ENCODE measurements at regions of chr1 and their contacts with region 1.

Region 1: DNA sequence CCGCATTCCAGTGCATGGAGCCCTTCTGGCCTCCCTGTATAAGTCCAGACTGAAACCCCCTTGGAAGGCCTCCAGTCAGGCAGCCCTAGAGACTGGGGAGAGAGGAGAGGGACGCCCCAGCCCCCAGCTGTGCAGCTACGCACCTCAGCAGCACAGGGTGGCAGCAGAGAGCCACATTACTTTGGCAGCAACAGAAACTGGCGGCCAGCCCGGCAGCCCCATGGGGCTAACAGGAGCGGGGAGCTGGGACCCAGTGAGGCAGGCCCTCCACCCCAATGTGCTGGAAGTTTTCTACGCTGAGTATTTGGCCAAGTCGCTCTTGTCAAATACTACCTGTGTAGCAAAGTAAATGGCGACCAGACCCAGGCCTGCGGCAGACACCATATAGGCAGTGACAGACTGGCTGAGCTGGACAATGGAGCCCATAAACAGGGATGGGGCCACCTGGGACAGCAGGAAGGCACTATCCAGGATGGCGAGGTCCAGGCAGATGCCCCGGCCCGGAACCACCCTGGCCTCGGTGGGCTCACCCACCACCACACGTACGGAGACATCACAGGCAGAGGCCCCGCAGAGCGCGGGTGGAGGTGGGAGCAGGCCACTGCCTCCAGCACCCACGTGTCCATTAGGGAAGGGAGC is 21.2 kb downstream of the SLC45A3 start:
- DNase-seq: peak; percentile 75
- ATAC-seq: peak; percentile 95
- H3K4me3 Mint-ChIP-seq: no peak overlapping the region
- H3K27ac Mint-ChIP-seq: no peak overlapping the region
- H3K4me1 Mint-ChIP-seq: peaks cover 20% of the 10 kb centered on the region
- H3K27me3 Mint-ChIP-seq: no peaks in the 10 kb centered on the region
- CTCF ChIP-seq: peak; percentile 81

Region 2: GRCh38 chr1:204651843-204652421 is 1007.1 kb before region 1 on chr1:
- CTCF ChIA-PET with region 1: no interaction called
- POLR2A ChIA-PET with region 1: no interaction called
- intact Hi-C with region 1: no loop called
- DNase-seq: no peak
- ATAC-seq: no peak
- H3K4me3 Mint-ChIP-seq: no peak overlapping the region
- H3K27ac Mint-ChIP-seq: no peak overlapping the region
- H3K4me1 Mint-ChIP-seq: no peaks in the 10 kb centered on the region
- H3K27me3 Mint-ChIP-seq: peaks cover 15% of the 10 kb centered on the region
- CTCF ChIP-seq: no peak

Region 3: GRCh38 chr1:205523891-205524793 is 134.9 kb before region 1 on chr1:
- CTCF ChIA-PET with region 1: interaction called, 88 read pairs
- POLR2A ChIA-PET with region 1: no interaction called
- intact Hi-C with region 1: loop called (anchors 1 kb)
- DNase-seq: peak; percentile 67
- ATAC-seq: peak; percentile 69
- H3K4me3 Mint-ChIP-seq: no peak overlapping the region
- H3K27ac Mint-ChIP-seq: no peak overlapping the region
- H3K4me1 Mint-ChIP-seq: no peaks in the 10 kb centered on the region
- H3K27me3 Mint-ChIP-seq: peaks cover 6% of the 10 kb centered on the region
- CTCF ChIP-seq: no peak

Region 4: DNA sequence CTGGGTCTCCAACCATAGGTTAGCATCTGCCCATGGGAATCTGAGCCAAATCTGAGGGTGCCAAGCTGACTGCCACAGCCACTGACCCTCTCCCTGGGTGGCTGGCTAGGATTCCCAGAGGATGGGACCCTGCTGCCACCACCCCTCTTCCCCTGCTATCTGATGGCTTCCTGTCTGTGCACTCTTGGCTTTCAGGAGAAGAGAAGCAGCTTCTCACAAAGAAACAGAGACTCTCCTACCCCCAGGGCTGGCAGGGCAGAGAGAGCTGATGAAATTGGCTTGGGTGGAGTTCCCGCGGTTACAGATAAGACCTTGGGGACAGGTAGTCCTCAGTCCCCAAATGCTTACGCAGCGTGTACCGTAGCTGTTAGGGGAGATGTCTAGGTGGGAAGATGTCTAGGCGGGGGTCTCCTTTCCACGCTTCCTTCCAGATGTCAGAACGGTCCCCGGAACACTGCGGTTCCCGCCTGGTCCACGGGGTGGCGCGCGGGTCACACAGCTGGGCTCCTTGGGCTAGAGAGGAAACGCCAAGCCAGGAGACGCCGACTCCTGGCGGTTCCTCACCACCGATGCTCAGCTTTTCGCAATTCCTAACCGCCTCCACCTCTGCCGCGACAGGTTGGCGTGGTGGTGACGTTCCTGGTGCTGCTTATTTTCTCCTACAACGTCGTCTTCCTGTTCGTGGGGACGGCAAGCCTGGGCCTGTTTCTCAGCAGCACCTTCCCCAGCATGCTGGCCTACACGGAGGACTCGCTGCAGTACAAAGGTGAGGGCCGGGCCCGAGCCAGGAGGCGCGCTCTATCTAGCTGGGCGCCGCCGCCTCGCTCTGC is 67.3 kb before region 1 on chr1:
- CTCF ChIA-PET with region 1: interaction called, 298 read pairs
- POLR2A ChIA-PET with region 1: interaction called, 46 read pairs
- intact Hi-C with region 1: loop called (anchors 1 kb)
- DNase-seq: peak; percentile 89
- ATAC-seq: peak; percentile 89
- H3K4me3 Mint-ChIP-seq: peak overlapping the region; percentile 90
- H3K27ac Mint-ChIP-seq: peak overlapping the region; percentile 90
- H3K4me1 Mint-ChIP-seq: peaks cover 48% of the 10 kb centered on the region
- H3K27me3 Mint-ChIP-seq: no peaks in the 10 kb centered on the region
- CTCF ChIP-seq: peak; percentile 87

Region 5: GRCh38 chr1:205711104-205712020 is 52.3 kb after region 1 on chr1:
- CTCF ChIA-PET with region 1: interaction called, 628 read pairs
- POLR2A ChIA-PET with region 1: interaction called, 40 read pairs
- intact Hi-C with region 1: loop called (anchors 1 kb)
- DNase-seq: no peak
- ATAC-seq: peak; percentile 91
- H3K4me3 Mint-ChIP-seq: no peak overlapping the region
- H3K27ac Mint-ChIP-seq: peak overlapping the region; percentile 9
- H3K4me1 Mint-ChIP-seq: peaks cover 23% of the 10 kb centered on the region
- H3K27me3 Mint-ChIP-seq: no peaks in the 10 kb centered on the region
- CTCF ChIP-seq: peak; percentile 46

Region 6: GRCh38 chr1:205791568-205792180 is 132.6 kb after region 1 on chr1:
- CTCF ChIA-PET with region 1: interaction called, 29 read pairs
- POLR2A ChIA-PET with region 1: interaction called, 3 read pairs
- intact Hi-C with region 1: loop called (anchors 1 kb)
- DNase-seq: peak; percentile 46
- ATAC-seq: peak; percentile 65
- H3K4me3 Mint-ChIP-seq: no peak overlapping the region
- H3K27ac Mint-ChIP-seq: peak overlapping the region; percentile 63
- H3K4me1 Mint-ChIP-seq: peaks cover 37% of the 10 kb centered on the region
- H3K27me3 Mint-ChIP-seq: no peaks in the 10 kb centered on the region
- CTCF ChIP-seq: no peak

Region 7: GRCh38 chr1:206106328-206107167 is 447.5 kb after region 1 on chr1:
- CTCF ChIA-PET with region 1: interaction called, 8 read pairs
- POLR2A ChIA-PET with region 1: no interaction called
- intact Hi-C with region 1: loop called (anchors 5 kb)
- DNase-seq: peak; percentile 71
- ATAC-seq: peak; percentile 89
- H3K4me3 Mint-ChIP-seq: no peak overlapping the region
- H3K27ac Mint-ChIP-seq: peak overlapping the region; percentile 73
- H3K4me1 Mint-ChIP-seq: peaks cover 34% of the 10 kb centered on the region
- H3K27me3 Mint-ChIP-seq: no peaks in the 10 kb centered on the region
- CTCF ChIP-seq: peak; percentile 70

Measured in activated B cell treated with CpG ODN at 0.5 μM for 24 hours (primary cell).